ENCODE measurements at regions of chr16 and their contacts with region 1.

Region 1: GRCh38 chr16:15427648-15428239 is 6.6 kb upstream of the BMERB1 start:
- DNase-seq: no peak

Region 2: GRCh38 chr16:15548482-15548891 is 120.7 kb after region 1 on chr16:
- intact Hi-C with region 1: loop called (anchors 2 kb)
- DNase-seq: no peak

Region 3: GRCh38 chr16:15643048-15643945 is 215.6 kb after region 1 on chr16 and contains the start of gene MARF1:
- intact Hi-C with region 1: loop called (anchors 2 kb)
- DNase-seq: peak; percentile 99
- total RNA-seq, gene MARF1: 39.7 TPM

Region 4: DNA sequence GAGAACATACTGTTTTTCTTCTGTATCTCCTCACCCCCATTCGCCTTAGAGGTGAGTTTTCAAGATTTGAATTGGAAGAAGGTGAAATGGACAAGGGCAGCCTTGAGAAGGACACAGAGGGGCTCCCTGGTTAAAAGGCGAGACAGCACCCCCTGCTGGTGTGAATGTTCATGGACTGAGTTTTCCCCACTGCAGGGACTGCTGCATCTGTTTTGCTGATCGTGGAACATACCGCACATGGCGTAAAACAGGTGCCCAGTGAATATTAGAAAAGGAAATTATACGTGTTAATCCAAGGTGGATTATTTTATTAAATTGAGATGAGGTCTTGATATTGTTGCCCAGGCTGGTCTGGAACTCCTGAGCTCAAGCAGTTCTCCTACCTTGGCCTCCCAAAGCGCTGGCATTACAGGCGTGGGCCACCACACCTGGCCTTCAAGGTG is 276.8 kb after region 1 on chr16:
- intact Hi-C with region 1: loop called (anchors 10 kb)
- DNase-seq: no peak